Ovary (tissue), 10 donors: ENCODE measurements at regions of chr9 and their contacts with region 1.

Region 1: GRCh38 chr9:93302551-93303257 is 118.8 kb downstream of the WNK2 start:
- DNase-seq: peak in 3 of 5 donors; percentile 13 to 39 (median 20)
- H3K4me3 ChIP-seq: no peak overlapping the region
- H3K27ac ChIP-seq: no peak overlapping the region
- H3K4me1 ChIP-seq: peaks cover 6% of the 10 kb centered on the region
- H3K27me3 ChIP-seq: no peaks in the 10 kb centered on the region
- CTCF ChIP-seq: no peak
- EP300 ChIP-seq: no peak
- POLR2A ChIP-seq: no peak

Region 2: GRCh38 chr9:93003552-93004407 is 298.9 kb before region 1 on chr9:
- intact Hi-C with region 1: loop called in 1 of 4 experiments (anchors 5 kb)
- DNase-seq: peak; percentile 69 to 81 (median 76)
- H3K4me3 ChIP-seq: peak overlapping the region; percentile 29
- H3K27ac ChIP-seq: peak overlapping the region in 1 of 2 donors; percentile 8
- H3K4me1 ChIP-seq: peaks cover 3% of the 10 kb centered on the region
- H3K27me3 ChIP-seq: no peaks in the 10 kb centered on the region
- CTCF ChIP-seq: peak; percentile 71 to 82 (median 79)
- EP300 ChIP-seq: no peak
- POLR2A ChIP-seq: no peak

Region 3: DNA sequence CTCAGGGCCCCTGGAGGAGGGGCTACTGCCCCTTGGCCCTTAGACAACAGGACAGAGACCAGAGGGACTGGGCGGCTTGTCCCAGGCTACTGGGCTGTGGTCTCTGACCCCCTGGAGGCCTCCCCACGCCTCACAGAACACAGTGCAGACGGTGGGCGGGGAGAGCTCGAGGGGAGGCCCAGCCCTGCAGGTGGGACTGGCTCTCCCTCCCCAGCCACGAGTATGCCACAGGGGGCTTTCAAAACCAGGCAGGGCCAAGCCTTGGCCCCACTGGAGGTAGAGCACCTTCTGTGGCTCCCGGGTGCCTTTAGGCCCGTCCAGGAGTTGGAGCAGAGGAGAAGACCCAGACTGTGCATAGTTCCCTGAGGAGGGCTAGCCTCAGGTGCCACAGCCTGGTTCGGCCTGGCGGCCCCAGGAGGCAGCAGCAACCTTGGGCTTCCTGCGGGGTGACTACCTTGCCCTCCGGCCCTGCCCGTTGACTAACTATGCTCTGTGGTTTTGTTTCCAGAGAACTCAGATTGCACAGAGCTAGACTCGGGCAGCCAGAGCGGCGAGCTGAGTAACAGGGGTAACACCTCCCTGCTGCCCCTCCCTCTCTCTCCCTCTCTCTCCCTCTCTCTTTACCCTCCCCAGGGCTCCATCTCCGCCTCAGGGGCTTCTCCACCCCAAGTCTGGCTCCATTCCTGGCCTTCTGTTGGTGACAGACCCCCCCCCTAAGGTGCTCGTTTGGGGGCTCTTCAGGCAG is 191.2 kb before region 1 on chr9:
- intact Hi-C with region 1: loop called in 1 of 4 experiments (anchors 5 kb)
- DNase-seq: peak; percentile 5 to 33 (median 21)
- H3K4me3 ChIP-seq: no peak overlapping the region
- H3K27ac ChIP-seq: no peak overlapping the region
- H3K4me1 ChIP-seq: peaks cover 7% of the 10 kb centered on the region
- H3K27me3 ChIP-seq: no peaks in the 10 kb centered on the region
- CTCF ChIP-seq: no peak
- EP300 ChIP-seq: no peak
- POLR2A ChIP-seq: no peak

Region 4: DNA sequence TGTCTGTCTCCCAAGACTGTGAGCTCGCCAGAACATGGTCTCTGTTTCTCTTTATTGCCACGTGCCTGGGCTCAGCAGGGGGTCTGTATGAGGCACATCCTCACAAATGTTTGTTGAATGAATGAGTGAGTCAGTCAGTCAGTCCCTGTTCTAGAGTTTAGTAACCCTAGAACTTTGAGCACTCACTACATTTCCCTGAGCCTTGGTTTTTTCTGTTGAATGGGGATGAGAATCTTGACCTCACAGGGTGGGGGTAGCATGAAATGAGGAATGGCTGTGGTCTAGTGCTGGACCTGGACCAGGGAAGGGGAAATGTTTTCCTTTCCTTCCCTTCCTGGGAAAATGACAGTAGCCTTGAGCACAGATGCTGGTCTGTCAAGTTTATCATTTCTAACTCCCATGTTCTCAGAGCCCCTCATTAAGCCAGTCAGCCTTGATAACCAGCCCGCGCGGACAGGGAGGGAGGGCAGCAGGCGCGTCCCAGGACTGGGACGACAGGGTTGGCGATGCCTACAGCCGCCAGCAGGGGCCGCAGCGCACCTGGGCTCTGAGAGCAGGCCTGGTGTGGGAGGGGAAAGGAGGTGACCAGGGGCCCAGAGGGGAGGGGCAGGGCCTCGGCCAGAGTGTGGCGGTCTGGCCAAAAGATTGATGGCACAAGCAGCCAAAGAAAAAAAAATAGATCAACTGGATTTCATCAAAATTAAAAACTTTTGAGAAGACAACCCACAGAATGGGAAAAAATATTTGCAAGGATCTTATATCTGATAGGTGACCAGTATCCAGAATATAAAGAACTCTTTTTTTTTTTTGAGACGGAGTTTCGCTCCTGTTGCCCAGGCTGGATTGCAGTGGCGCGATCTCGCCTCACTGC is 142.9 kb before region 1 on chr9:
- intact Hi-C with region 1: loop called in 3 of 4 experiments (anchors 5 to 10 kb)
- DNase-seq: peak; percentile 72 to 88 (median 85)
- H3K4me3 ChIP-seq: no peak overlapping the region
- H3K27ac ChIP-seq: no peak overlapping the region
- H3K4me1 ChIP-seq: peaks cover 7% of the 10 kb centered on the region
- H3K27me3 ChIP-seq: no peaks in the 10 kb centered on the region
- CTCF ChIP-seq: peak; percentile 74 to 89 (median 88)
- EP300 ChIP-seq: no peak
- POLR2A ChIP-seq: no peak

Region 5: DNA sequence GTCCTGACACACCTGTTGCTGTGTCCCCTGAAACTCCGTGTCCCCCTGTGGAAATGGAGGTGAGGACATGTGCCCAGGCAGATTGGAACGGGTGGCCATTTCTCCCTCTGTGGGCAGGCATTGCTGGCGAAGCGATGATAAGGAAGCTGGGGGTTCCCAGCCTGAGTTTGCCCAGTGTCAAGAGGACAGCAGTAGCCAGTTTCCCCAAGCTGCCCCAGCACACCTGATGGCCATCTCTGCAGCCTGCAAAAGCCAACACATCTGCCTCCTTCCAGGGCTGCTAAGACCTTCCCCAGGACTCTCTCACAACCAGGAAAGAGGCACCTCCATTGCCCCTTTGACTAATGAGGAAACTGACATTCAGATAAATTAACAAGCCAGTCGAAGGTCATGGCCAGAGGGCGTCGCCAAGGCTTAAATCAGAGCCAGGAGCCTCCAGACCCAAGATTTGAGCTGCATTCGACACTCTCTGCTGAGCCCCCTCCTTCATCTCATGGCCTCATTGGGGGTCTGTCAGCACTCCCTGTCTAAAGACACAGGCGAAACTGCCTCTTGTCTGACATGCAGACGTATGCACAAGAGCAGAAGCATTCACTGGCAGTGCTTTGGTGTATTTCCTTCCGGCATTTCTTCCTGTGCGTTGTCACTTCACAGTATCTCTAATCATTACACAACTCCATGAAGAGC is 129.2 kb before region 1 on chr9:
- intact Hi-C with region 1: loop called in 2 of 4 experiments (anchors 10 kb)
- DNase-seq: no peak
- H3K4me3 ChIP-seq: no peak overlapping the region
- H3K27ac ChIP-seq: no peak overlapping the region
- H3K4me1 ChIP-seq: no peaks in the 10 kb centered on the region
- H3K27me3 ChIP-seq: no peaks in the 10 kb centered on the region
- CTCF ChIP-seq: no peak
- EP300 ChIP-seq: no peak
- POLR2A ChIP-seq: no peak